Upper lobe of right lung (tissue), 1 donor: ENCODE measurements at regions of chr3 and their contacts with region 1.

Region 1: DNA sequence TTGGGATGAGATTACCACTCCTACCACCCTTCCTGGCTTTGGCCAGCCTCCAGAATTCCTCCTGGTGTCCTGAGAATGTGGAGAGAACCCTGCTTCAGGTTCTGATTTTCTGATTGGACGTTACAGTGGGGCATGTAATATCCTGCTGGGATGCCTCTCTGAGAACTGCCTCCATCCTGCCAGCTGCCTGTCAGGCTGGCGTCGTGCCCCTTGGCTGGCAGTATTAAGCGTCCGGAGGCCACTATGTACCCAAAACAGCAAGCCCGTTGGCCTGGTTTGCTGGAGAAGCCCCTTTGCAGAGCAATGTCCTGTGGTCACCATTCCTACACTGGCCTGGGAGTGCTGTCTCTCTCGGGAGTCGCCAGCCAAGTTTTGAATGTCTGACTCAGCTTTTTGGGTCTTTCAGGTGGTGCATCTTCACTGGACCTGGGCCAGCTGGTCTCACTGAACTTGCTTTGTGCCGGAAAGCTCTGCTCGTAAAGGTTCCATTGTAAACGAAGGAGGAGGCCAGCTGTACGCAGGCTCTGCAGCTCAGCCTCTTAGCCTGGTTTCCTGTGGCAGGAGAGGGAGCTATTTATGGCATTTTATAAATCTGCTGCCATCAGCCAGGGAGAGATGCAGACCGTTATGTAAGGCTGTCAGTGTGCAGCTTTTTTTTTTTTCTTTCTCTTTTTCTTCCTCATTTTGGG is 19.1 kb upstream of the TRAK1 start:
- DNase-seq: no peak
- ATAC-seq: peak; percentile 78
- H3K4me3 ChIP-seq: peak overlapping the region; percentile 25
- H3K27ac ChIP-seq: peak overlapping the region; percentile 83
- H3K4me1 ChIP-seq: peaks cover 48% of the 10 kb centered on the region
- H3K27me3 ChIP-seq: no peaks in the 10 kb centered on the region
- CTCF ChIP-seq: no peak

Region 2: DNA sequence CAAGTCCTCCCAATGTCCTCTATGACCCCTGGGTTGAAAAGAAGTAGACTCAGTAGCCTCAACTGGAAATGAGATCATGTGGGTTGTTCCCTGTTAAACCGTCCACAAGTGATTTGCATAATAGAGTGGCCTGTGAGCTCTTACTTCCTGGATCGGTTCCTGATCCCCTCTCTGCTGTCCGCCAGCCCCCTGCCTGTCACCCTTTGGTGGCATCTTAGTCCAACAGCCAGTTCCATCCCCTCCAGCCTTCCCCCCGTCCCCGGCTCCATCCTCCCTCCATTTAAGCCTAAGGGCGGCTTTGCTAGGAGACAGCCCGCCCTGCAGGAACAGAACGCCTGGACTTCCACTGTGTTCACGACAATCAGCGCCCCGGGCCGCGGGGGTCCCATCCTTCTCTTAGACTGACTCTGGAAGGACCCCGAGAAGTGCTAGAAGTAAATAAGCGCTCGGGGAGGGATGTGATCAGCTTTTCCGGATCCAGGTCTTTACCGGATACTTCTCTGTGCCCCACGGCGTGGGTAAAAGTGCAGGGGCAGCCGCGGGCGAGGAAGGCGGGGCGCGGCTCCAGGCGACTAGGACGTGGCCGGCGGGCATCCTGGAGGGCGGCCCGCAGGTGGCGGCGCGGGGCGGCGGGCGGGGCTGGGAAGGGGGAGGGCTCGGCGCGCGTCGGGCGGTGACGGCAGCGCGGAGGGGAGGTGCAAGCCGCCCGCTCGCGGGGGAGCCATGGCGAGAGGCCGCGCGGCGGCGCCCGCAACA is 58.9 kb before region 1 on chr3:
- intact Hi-C with region 1: loop called (anchors 10 kb)
- DNase-seq: peak; percentile 92
- ATAC-seq: peak; percentile 95
- H3K4me3 ChIP-seq: peak overlapping the region; percentile 65
- H3K27ac ChIP-seq: peak overlapping the region; percentile 90
- H3K4me1 ChIP-seq: peaks cover 26% of the 10 kb centered on the region
- H3K27me3 ChIP-seq: no peaks in the 10 kb centered on the region
- CTCF ChIP-seq: no peak